ENCODE measurements at regions of chr16 and their contacts with region 1.

Region 1: GRCh38 chr16:12009462-12009861 is 32.9 kb downstream of the SNX29 start:
- DNase-seq: peak in 6 of 9 donors; percentile 41 to 58 (median 46)
- ATAC-seq: peak; percentile 55
- H3K4me3 ChIP-seq: no peak overlapping the region
- H3K4me3 Mint-ChIP-seq: peak overlapping the region in 7 of 10 donors; percentile 40 to 76 (median 66)
- H3K27ac ChIP-seq: peak overlapping the region; percentile 34
- H3K27ac Mint-ChIP-seq: peak overlapping the region; percentile 26 to 96 (median 87)
- H3K4me1 ChIP-seq: peaks cover 0 to 13% of the 10 kb centered on the region in 2 donors
- H3K4me1 Mint-ChIP-seq: peaks cover 8 to 34% (median 29%) of the 10 kb centered on the region in 7 donors
- H3K27me3 ChIP-seq: no peaks in the 10 kb centered on the region
- H3K27me3 Mint-ChIP-seq: no peaks in the 10 kb centered on the region

Region 2: DNA sequence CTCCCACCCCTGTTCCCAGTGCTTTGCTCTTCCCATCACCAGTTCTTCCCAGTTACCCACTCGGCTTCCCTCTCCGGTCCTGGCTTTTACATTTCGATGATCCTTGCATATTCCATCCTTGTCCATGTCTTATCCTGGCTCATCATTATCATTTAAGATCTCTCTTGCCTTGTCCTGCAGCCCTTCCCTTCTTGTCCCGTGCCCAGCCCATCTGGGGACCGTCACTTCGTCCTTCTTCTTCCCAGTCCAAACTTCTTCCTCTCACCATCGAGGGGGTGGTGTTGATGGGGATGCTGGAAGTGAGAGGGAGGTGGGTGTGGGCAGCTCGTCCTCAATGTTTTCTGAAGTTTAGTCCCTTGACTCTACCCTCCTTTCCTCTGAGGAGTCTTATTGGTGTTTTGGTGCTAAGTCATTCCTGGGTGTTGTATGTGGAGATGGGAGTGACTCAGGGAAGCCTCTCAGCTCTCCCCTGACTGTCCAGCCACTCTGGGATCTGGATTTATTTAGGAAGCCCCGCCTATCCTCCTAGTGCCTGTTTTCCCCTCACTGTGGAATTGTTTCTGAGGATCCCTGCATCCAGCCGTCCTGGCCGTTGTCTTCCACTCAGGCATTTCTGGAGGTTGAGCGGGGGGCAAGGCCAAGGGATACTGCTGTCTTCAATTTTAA is 32.0 kb before region 1 on chr16:
- CTCF ChIA-PET with region 1: interaction called, 4 read pairs
- POLR2A ChIA-PET with region 1: interaction called, 6 read pairs
- intact Hi-C with region 1: loop called in 1 of 2 experiments (anchors 1 kb)
- DNase-seq: no peak
- ATAC-seq: no peak
- H3K4me3 ChIP-seq: peak overlapping the region; percentile 71
- H3K4me3 Mint-ChIP-seq: peak overlapping the region; percentile 85 to 99 (median 94)
- H3K27ac ChIP-seq: peak overlapping the region; percentile 88
- H3K27ac Mint-ChIP-seq: peak overlapping the region; percentile 60 to 97 (median 93)
- H3K4me1 ChIP-seq: peaks cover 11 to 19% of the 10 kb centered on the region in 2 donors
- H3K4me1 Mint-ChIP-seq: peaks cover 33 to 55% (median 42%) of the 10 kb centered on the region in 7 donors
- H3K27me3 ChIP-seq: no peaks in the 10 kb centered on the region
- H3K27me3 Mint-ChIP-seq: no peaks in the 10 kb centered on the region

Measured in naive thymus-derived CD4-positive, alpha-beta T cell (primary cell).